Endothelial cell of umbilical vein (primary cell): ENCODE measurements at regions of chr9 and their contacts with region 1.

Region 1: DNA sequence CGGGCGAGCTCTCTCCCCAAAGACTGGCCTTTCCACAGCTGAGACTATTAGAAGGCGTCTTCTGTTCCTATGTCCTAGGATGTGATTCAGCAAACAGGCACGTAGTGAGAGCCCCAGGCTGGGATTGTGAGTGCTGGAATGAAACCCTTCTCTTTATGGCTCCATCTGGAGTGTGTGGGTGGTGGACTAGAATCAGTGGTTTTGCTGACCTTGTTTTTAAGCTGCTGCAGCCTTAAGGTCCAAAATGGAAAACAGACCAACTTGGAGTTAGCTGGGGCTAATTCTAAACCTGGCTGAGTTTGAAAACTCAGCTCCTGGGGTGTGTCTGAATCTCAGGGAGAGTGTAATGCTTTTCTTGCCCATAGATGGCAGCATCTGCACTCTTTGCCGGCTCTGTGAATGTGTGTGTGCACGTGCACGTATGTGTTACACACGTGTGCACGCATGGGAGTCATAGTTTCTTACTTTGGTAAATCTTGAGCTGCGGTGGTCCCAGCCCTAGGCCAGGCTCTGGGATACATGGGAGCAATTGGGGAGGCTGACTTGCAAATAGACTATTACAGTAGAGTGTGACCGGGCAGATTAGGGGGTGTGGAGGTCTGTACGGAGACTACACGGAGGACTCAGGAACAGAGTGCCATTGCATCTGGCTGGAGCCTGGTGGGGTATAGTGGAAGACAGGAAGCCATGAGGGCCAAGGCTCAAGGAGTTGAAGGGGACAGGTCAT is 10.7 kb downstream of the GSN start:
- DNase-seq: peak; percentile 84
- H3K4me3 ChIP-seq: peak overlapping the region in 1 of 3 experiments; percentile 8
- H3K27ac ChIP-seq: peak overlapping the region; percentile 73
- H3K4me1 ChIP-seq: peaks cover 44% of the 10 kb centered on the region
- H3K27me3 ChIP-seq: no peaks in the 10 kb centered on the region
- CTCF ChIP-seq: peak; percentile 80 to 84
- POLR2A ChIP-seq: no peak

Region 2: GRCh38 chr9:121222524-121223171 is 56.0 kb before region 1 on chr9:
- CTCF ChIA-PET with region 1: interaction called, 23 read pairs
- POLR2A ChIA-PET with region 1: no interaction called
- dilution Hi-C with region 1: no loop called
- intact Hi-C with region 1: loop called (anchors 1 kb)
- DNase-seq: peak; percentile 54
- H3K4me3 ChIP-seq: no peak overlapping the region
- H3K27ac ChIP-seq: no peak overlapping the region
- H3K4me1 ChIP-seq: peaks cover 5% of the 10 kb centered on the region
- H3K27me3 ChIP-seq: no peaks in the 10 kb centered on the region
- CTCF ChIP-seq: peak; percentile 59 to 66
- POLR2A ChIP-seq: no peak

Region 3: GRCh38 chr9:121267689-121268597 is 10.8 kb before region 1 on chr9 and contains the start of gene GSN:
- CTCF ChIA-PET with region 1: interaction called, 68 read pairs
- POLR2A ChIA-PET with region 1: interaction called, 12 read pairs
- dilution Hi-C with region 1: no loop called
- intact Hi-C with region 1: loop called (anchors 1 kb)
- DNase-seq: peak; percentile 68
- H3K4me3 ChIP-seq: peak within 1 kb of the TSS; percentile 51 to 86 (median 81)
- H3K27ac ChIP-seq: no peak within 1 kb of the TSS
- H3K4me1 ChIP-seq: peaks cover 16% of the 10 kb centered on the region
- H3K27me3 ChIP-seq: peaks cover 0 to 2% of the 10 kb centered on the region in 2 experiments
- CTCF ChIP-seq: no peak
- POLR2A ChIP-seq: no peak
- total RNA-seq, gene GSN: 130 and 176 TPM in 2 replicates

Region 4: GRCh38 chr9:121305269-121305994 is 26.7 kb after region 1 on chr9:
- CTCF ChIA-PET with region 1: interaction called, 49 read pairs
- POLR2A ChIA-PET with region 1: no interaction called
- dilution Hi-C with region 1: no loop called
- intact Hi-C with region 1: no loop called
- DNase-seq: no peak
- H3K4me3 ChIP-seq: no peak overlapping the region
- H3K27ac ChIP-seq: no peak overlapping the region
- H3K4me1 ChIP-seq: no peaks in the 10 kb centered on the region
- H3K27me3 ChIP-seq: no peaks in the 10 kb centered on the region
- CTCF ChIP-seq: no peak
- POLR2A ChIP-seq: no peak

Region 5: GRCh38 chr9:121350993-121351561 is 72.4 kb after region 1 on chr9:
- CTCF ChIA-PET with region 1: interaction called, 10 read pairs
- POLR2A ChIA-PET with region 1: no interaction called
- dilution Hi-C with region 1: no loop called
- intact Hi-C with region 1: no loop called
- DNase-seq: peak; percentile 98
- H3K4me3 ChIP-seq: no peak overlapping the region
- H3K27ac ChIP-seq: peak overlapping the region; percentile 66
- H3K4me1 ChIP-seq: peaks cover 52% of the 10 kb centered on the region
- H3K27me3 ChIP-seq: no peaks in the 10 kb centered on the region
- CTCF ChIP-seq: no peak
- POLR2A ChIP-seq: no peak

Region 6: DNA sequence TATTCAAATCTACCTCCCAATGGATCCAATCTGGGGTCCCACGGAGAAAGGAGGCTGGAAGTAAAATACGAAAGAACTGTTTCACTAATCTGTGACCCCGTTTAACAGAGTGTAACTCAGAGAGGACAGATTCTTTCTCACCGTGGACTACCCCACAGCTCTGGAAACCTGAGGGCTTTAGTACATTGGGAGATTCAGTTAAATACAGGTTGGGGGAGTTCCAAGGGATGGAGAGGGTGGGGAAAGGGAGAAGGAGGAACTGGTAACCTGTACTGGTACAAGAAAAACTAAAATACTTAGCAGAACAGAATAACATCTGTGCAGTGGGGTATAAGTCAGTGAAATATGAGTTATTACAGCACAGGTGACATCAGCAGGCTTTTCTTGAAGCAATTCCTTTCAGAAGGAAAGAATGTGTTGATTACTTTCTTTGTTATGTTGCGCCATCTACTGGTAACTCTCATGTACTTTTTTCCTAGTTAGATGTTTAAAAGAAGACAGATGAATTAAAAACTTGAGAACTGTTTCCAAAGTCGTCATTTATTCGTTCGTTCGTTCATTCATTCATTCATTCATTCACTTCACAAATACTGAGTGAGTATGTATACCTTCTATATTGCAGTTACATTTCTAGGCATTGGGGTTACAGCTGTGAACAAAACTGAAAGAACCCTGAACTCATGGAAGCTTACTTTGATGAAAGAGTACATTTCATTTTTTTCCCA is 121.3 kb after region 1 on chr9:
- CTCF ChIA-PET with region 1: interaction called, 13 read pairs
- POLR2A ChIA-PET with region 1: no interaction called
- dilution Hi-C with region 1: no loop called
- intact Hi-C with region 1: loop called (anchors 1 kb)
- DNase-seq: peak; percentile 82
- H3K4me3 ChIP-seq: no peak overlapping the region
- H3K27ac ChIP-seq: no peak overlapping the region
- H3K4me1 ChIP-seq: peaks cover 21% of the 10 kb centered on the region
- H3K27me3 ChIP-seq: no peaks in the 10 kb centered on the region
- CTCF ChIP-seq: peak; percentile 25 to 35
- POLR2A ChIP-seq: no peak